ENCODE measurements at regions of chr5 and their contacts with region 1.

Region 1: DNA sequence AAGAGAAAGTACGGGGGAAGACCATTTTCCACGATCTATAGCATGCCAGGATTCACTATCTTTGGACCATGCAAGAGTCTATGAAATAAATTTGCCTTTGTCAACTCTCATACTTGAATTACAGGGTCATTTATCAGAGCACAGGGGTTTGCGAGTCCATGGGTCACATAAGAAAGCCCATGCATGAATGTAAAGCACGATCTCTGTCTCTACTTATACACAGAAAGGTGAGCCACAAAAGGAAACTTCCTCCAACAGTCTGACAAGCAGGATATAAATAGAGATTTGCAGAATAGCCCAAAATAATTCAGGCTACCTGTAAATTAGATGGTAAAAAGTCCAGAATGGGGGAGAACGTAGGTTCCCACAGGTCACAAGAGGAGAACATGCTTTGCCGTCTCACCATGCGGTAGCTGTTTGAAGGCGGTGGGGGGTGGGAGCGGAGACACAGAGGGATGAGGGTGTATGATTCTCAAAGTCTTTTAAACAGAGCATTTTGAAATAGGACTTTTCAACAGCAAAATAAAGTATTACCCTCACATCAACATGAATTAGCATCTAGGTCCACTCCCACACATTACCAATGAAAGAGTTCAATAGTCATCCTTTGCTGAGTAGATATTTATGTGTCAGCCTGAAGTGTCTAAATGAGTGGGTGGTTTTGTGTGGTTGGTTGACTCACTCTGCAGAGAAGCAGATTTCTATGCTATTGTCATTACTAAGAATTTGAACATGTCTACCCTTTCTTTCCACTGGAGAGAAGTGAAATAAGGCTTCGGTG is 279.7 kb downstream of the EBF1 start:
- DNase-seq: peak; percentile 55
- ATAC-seq: peak; percentile 56
- H3K4me3 ChIP-seq: peak overlapping the region; percentile 2 to 50 (median 19)
- H3K4me3 Mint-ChIP-seq: peak overlapping the region; percentile 82
- H3K27ac ChIP-seq: peak overlapping the region; percentile 82 to 87
- H3K27ac Mint-ChIP-seq: peak overlapping the region; percentile 80
- H3K4me1 ChIP-seq: peaks cover 98 to 99% of the 10 kb centered on the region in 2 donors
- H3K4me1 Mint-ChIP-seq: peaks cover 97% of the 10 kb centered on the region
- H3K27me3 ChIP-seq: no peaks in the 10 kb centered on the region
- H3K27me3 Mint-ChIP-seq: no peaks in the 10 kb centered on the region
- CTCF ChIP-seq: no peak

Region 2: DNA sequence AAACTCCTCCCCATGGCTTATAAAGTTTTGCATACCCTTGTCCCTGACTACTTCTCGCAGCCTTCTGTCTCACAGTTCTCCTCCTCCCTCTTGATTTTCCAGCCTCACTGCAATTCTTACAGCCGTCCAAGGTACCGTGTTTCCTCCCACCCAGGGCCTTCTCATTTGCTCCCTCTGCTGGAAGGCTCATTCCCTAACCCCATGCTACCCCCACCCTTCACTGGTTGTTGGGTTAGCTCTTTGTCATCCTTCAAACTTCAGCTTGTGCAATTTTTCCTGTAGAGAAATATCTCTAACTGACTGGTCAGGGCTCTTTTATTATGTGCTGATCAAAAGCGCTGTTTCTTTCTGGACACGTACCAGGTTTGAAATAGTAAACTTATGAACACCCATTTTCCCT is 49.5 kb before region 1 on chr5:
- CTCF ChIA-PET with region 1: interaction called, 4 read pairs
- POLR2A ChIA-PET with region 1: interaction called, 3 read pairs
- intact Hi-C with region 1: loop called (anchors 2 kb)
- DNase-seq: peak; percentile 34
- ATAC-seq: no peak
- H3K4me3 ChIP-seq: peak overlapping the region in 1 of 5 experiments; percentile 4
- H3K4me3 Mint-ChIP-seq: peak overlapping the region; percentile 29
- H3K27ac ChIP-seq: peak overlapping the region in 1 of 2 donors; percentile 15
- H3K27ac Mint-ChIP-seq: peak overlapping the region; percentile 12
- H3K4me1 ChIP-seq: peaks cover 71 to 79% of the 10 kb centered on the region in 2 donors
- H3K4me1 Mint-ChIP-seq: peaks cover 89% of the 10 kb centered on the region
- H3K27me3 ChIP-seq: no peaks in the 10 kb centered on the region
- H3K27me3 Mint-ChIP-seq: no peaks in the 10 kb centered on the region
- CTCF ChIP-seq: no peak

Region 3: DNA sequence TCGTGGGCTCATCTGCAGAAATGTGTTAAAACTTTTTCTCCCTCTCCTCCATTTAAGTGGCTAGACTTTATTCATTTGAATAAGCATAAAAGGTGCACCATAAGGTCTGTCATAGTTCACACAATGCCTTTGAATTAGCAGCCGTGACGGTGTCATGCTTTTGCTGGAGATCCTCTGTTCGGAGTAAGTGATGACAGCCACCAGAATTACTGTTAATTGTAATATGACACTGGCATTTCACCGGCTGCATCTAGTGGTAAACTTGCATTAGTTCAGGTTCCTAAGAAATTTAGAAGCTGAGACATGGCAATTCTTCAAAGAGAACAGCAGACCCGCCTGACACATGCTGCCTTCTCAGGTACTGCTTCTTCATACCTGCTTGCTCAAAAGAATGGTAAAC is 37.9 kb after region 1 on chr5:
- CTCF ChIA-PET with region 1: no interaction called
- POLR2A ChIA-PET with region 1: no interaction called
- intact Hi-C with region 1: loop called (anchors 5 kb)
- DNase-seq: no peak
- ATAC-seq: no peak
- H3K4me3 ChIP-seq: no peak overlapping the region
- H3K4me3 Mint-ChIP-seq: peak overlapping the region; percentile 20
- H3K27ac ChIP-seq: peak overlapping the region in 1 of 2 donors; percentile 47
- H3K27ac Mint-ChIP-seq: no peak overlapping the region
- H3K4me1 ChIP-seq: peaks cover 54 to 63% of the 10 kb centered on the region in 2 donors
- H3K4me1 Mint-ChIP-seq: peaks cover 76% of the 10 kb centered on the region
- H3K27me3 ChIP-seq: no peaks in the 10 kb centered on the region
- H3K27me3 Mint-ChIP-seq: no peaks in the 10 kb centered on the region
- CTCF ChIP-seq: no peak